Dorsolateral prefrontal cortex (tissue), 120 donors: ENCODE measurements at regions of chr10 and their contacts with region 1.

Region 1: GRCh38 chr10:101441541-101442455 is 87.8 kb downstream of the BTRC start:
- DNase-seq: peak in 2 of 10 donors; percentile 34 to 44
- H3K4me3 ChIP-seq: no peak overlapping the region
- H3K27ac ChIP-seq: no peak overlapping the region
- H3K27me3 ChIP-seq: no peaks in the 10 kb centered on the region
- CTCF ChIP-seq: peak in 55 of 56 donors; percentile 42 to 80 (median 66)

Region 2: DNA sequence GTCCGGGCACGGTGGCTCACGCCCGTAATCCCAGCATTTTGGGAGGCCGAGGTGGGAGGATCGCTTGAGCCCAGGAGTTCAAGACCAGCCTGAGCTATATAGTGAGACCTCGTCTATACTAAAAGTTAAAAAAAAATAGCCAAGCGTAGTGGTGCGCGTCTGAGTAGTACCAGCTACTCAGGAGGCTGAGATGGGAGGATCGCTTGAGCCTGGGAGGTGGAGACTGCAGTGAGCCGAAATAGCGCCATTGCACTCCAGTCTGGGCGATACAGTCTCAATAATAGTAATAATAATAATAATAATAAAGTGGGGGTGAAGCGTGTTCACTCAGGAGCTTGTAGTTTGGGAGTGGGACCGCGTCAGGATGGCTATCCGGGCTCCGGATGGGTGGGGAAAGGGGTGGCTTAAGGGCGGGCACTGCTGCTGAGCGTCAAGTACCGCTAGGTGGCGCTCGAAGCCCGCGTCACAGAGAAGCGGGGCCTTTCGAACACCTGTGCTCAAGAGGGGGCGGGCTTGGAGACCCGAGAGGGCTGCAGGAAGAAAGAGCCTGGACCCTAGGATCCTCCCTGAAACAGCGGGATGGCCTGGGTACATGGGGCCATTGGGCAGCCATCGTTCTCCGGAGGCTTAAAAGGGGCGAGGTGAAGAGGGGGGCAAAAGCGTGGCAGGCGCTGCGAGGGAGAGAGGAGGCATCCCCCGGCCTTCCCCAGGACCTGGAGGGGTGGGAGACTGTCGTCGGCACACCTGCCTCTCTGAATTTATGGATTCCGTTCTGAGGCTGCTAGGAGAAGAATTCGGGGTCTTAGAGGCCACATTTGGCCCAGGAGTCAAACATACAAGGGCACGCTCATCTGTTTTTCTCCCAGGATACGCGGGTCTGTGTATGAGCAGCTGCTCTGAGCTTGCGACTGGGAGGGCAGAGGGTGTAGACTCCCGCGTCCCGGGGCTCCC is 227.1 kb before region 1 on chr10:
- intact Hi-C with region 1: loop called (anchors 2 to 5 kb)
- DNase-seq: peak in 9 of 10 donors; percentile 39 to 70 (median 49)
- H3K4me3 ChIP-seq: peak overlapping the region in 25 of 59 donors; percentile 5 to 52 (median 30)
- H3K27ac ChIP-seq: no peak overlapping the region
- H3K27me3 ChIP-seq: peaks cover 13 to 100% (median 89%) of the 10 kb centered on the region in 45 donors
- CTCF ChIP-seq: peak; percentile 69 to 97 (median 89)

Region 3: DNA sequence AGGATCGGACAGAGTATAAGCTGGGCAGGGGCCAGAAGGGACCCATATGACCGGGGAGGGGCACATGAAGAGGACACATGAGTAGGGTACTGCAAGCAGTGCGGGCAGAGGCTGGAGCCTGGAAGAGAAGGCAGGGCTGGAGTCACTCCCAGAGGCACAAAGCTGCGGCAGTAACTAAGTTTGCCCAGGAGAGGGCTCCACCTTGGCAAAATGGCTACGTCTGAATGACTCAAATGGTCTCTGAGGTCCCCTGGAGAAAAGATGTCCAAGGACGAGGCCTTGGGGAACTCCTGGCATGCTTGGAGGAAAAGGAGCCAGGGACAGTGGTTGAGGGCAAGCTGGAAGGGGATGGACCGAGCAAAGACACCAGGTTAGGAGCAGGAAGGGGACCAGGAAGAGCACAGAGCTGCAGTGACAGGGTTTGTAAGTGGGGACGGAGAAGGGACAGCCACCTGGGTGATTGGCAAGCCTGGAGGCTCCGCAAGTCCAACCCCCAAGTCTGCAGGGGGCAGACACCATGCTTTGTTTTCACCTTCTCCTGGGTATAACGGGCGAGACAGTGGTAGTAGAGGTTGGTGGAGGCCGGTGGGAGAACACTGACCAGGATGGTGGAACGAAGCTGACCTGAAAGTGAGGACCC is 169.4 kb before region 1 on chr10:
- intact Hi-C with region 1: loop called in 1 of 2 experiments (anchors 5 kb)
- DNase-seq: peak; percentile 52 to 80 (median 68)
- H3K4me3 ChIP-seq: no peak overlapping the region
- H3K27ac ChIP-seq: no peak overlapping the region
- H3K27me3 ChIP-seq: peaks cover 0 to 4% (median 0%) of the 10 kb centered on the region in 45 donors
- CTCF ChIP-seq: peak in 55 of 56 donors; percentile 24 to 83 (median 74)

Region 4: GRCh38 chr10:101397140-101397539 is 44.7 kb before region 1 on chr10:
- intact Hi-C with region 1: no loop called
- DNase-seq: peak in 2 of 10 donors; percentile 4 to 63
- H3K4me3 ChIP-seq: peak overlapping the region in 9 of 59 donors; percentile 9 to 30 (median 14)
- H3K27ac ChIP-seq: peak overlapping the region in 7 of 59 donors; percentile 5 to 59 (median 36)
- H3K27me3 ChIP-seq: no peaks in the 10 kb centered on the region
- CTCF ChIP-seq: no peak

Region 5: DNA sequence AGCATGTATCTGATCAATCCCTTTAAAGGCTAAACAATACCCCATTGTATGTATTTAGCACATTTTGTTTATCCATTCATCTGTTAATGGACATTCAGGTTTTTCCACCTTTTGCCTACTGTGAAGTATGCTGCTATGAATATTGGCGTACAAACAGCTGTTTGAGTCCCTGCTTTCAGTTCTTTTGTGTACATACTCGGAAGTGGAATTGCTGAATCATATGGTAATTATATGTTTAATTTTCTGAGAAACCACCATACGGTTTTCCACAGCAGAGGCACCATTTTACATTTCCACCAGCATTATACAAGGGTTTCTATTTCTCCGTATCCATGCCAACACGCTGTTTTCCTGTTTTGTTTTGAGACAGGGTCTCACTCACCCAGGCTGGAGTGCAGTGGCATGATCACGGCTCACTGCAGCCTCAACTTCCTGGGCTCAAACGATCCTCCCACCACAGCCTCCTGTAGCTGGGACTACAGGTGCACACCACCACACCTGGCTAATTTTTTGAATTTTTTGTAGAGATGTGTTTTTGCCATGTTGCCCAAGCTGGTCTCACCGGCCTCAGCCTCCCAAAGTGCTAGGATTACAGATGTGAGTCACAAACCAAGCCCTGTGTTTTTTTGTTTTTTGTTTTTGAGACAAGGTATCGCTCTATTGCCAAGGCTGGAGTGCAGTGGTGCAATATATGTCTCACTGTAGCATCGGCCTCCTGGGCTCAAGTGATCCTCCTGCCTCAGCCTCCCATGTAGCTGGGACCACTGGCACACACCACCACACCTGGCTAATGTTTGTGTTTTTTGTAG is 275.3 kb after region 1 on chr10:
- intact Hi-C with region 1: no loop called
- DNase-seq: no peak
- H3K4me3 ChIP-seq: no peak overlapping the region
- H3K27ac ChIP-seq: no peak overlapping the region
- H3K27me3 ChIP-seq: peaks cover 0 to 3% (median 0%) of the 10 kb centered on the region in 45 donors
- CTCF ChIP-seq: no peak